ENCODE measurements at regions of chr7 and their contacts with region 1.

Region 1: GRCh38 chr7:322111-322671 is 32.2 kb downstream of the FOXL3 start:
- DNase-seq: peak; percentile 62
- H3K4me3 Mint-ChIP-seq: no peak overlapping the region
- H3K27ac Mint-ChIP-seq: no peak overlapping the region
- H3K4me1 Mint-ChIP-seq: no peaks in the 10 kb centered on the region
- H3K27me3 Mint-ChIP-seq: peaks cover 39% of the 10 kb centered on the region
- CTCF ChIP-seq: peak; percentile 94

Region 2: GRCh38 chr7:732094-732541 is 409.9 kb after region 1 on chr7:
- CTCF ChIA-PET with region 1: interaction called, 10 read pairs
- POLR2A ChIA-PET with region 1: no interaction called
- intact Hi-C with region 1: no loop called
- DNase-seq: peak; percentile 72
- H3K4me3 Mint-ChIP-seq: peak overlapping the region; percentile 19
- H3K27ac Mint-ChIP-seq: no peak overlapping the region
- H3K4me1 Mint-ChIP-seq: peaks cover 25% of the 10 kb centered on the region
- H3K27me3 Mint-ChIP-seq: no peaks in the 10 kb centered on the region
- CTCF ChIP-seq: peak; percentile 30

Region 3: GRCh38 chr7:774161-775109 is 452.2 kb after region 1 on chr7:
- CTCF ChIA-PET with region 1: interaction called, 13 read pairs
- POLR2A ChIA-PET with region 1: no interaction called
- intact Hi-C with region 1: no loop called
- DNase-seq: peak; percentile 23
- H3K4me3 Mint-ChIP-seq: no peak overlapping the region
- H3K27ac Mint-ChIP-seq: no peak overlapping the region
- H3K4me1 Mint-ChIP-seq: no peaks in the 10 kb centered on the region
- H3K27me3 Mint-ChIP-seq: no peaks in the 10 kb centered on the region
- CTCF ChIP-seq: peak; percentile 84

Measured in MCF 10A (cell line).